ENCODE measurements at regions of chr9 and their contacts with region 1.

Region 1: GRCh38 chr9:35258676-35259474 is 97.1 kb downstream of the UNC13B start:
- DNase-seq: peak; percentile 71
- ATAC-seq: peak; percentile 86
- H3K4me3 ChIP-seq: peak overlapping the region; percentile 44 to 63 (median 48)
- H3K27ac ChIP-seq: peak overlapping the region; percentile 81
- H3K4me1 ChIP-seq: peaks cover 23% of the 10 kb centered on the region
- H3K27me3 ChIP-seq: no peaks in the 10 kb centered on the region
- CTCF ChIP-seq: peak; percentile 77
- EP300 ChIP-seq: no peak
- POLR2A ChIP-seq: no peak
- RAD21 ChIP-seq: peak; percentile 60; the same call in 1 of the 2 replicates

Region 2: DNA sequence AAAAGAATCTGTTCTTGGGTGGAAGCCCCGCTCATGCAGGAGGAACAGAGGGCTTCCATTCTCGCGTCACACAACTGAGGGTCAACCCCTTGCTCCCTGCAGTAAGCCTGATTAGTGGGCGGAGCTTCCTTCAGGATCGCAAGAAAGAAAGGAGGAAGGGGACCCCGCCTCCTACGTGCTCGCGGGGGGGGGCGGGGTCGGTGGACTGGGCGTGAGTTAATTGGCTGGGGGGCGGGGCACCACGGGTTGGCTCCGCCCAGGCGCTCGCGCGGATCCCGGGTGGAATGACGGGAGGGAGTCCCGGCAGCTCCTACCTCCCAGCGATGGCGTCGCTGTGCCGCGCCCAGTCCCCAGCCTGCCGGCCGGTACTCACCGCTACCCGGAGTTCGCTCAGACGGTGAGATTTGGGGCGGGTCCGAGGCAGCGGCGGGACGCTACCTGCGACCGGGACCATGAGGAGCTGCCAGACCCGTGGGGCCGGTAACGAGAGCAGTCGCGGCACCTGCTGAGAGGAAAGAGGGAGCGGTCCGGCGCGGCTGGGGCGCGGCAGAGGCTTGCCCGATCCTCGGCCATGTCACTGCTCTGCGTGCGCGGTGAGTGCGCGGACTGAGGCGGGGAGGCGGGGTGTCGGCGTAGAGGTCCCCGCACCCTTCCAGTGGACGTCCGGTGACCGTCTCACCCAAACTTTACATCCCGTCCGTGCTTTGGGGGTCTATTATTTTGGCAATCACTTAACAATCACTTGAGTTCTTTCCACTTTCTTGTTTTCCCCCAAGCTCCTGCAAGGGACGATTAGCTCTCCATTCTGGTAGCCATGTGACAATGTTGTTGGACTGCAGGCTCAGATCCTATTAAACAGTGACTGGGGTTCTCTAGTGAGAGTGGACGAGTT is 96.9 kb before region 1 on chr9 and contains the start of gene UNC13B:
- CTCF ChIA-PET with region 1: no interaction called
- POLR2A ChIA-PET with region 1: interaction called, 16 read pairs
- in situ Hi-C with region 1: no loop called
- intact Hi-C with region 1: loop called (anchors 10 kb)
- DNase-seq: peak; percentile 93
- ATAC-seq: peak; percentile 97
- H3K4me3 ChIP-seq: peak within 1 kb of the TSS; percentile 78 to 98 (median 85)
- H3K27ac ChIP-seq: peak within 1 kb of the TSS; percentile 75
- H3K4me1 ChIP-seq: peaks cover 43% of the 10 kb centered on the region
- H3K27me3 ChIP-seq: no peaks in the 10 kb centered on the region; a peak in 1 of 5 replicates
- CTCF ChIP-seq: peak; percentile 59
- EP300 ChIP-seq: no peak
- POLR2A ChIP-seq: peak; percentile 82 to 84
- RAD21 ChIP-seq: peak; percentile 32
- total RNA-seq, gene UNC13B: 18.3 and 23.6 TPM in 2 replicates

Region 3: DNA sequence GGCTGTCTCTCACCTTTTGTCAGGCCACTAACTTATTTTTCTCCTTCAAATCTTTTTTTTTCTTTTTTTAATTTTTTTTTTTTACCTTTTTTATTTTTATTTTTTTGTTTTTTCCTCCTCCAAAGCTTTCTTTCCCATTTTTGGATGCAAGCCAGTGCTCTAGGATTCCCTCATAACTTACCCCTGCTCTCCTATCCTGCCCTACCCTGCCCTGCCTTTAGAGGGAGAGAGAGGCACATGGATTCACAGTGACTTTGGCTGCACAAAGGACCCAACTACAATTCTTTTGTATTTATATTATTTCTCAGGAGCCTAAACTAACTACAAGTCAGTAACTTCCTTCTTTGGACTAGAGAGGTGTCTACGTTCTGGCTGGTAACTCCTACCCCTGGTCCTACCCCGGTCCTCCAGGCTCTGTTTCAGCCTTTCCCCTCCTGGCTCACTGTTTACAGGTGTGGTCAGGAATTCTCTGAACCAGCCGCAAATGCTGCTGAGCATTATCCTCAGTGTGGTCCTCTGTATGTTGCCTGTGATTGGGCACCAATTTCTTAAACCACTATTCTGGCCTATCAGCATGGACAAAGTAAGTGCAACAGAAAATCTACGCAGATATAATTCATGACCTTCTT is 222.6 kb after region 1 on chr9:
- CTCF ChIA-PET with region 1: no interaction called
- POLR2A ChIA-PET with region 1: no interaction called
- in situ Hi-C with region 1: no loop called
- intact Hi-C with region 1: loop called (anchors 1 kb)
- DNase-seq: peak; percentile 54
- ATAC-seq: peak; percentile 75
- H3K4me3 ChIP-seq: no peak overlapping the region
- H3K27ac ChIP-seq: no peak overlapping the region
- H3K4me1 ChIP-seq: peaks cover 7% of the 10 kb centered on the region; the same call in 1 of the 2 replicates
- H3K27me3 ChIP-seq: no peaks in the 10 kb centered on the region
- CTCF ChIP-seq: peak; percentile 79
- EP300 ChIP-seq: no peak
- POLR2A ChIP-seq: no peak
- RAD21 ChIP-seq: peak; percentile 64; the same call in 1 of the 2 replicates

Measured in HepG2 (cell line).